ENCODE measurements at regions of chr7 and their contacts with region 1.

Region 1: GRCh38 chr7:102286237-102287110 is at the start of gene SH2B2:
- DNase-seq: peak; percentile 86
- CTCF ChIP-seq: no peak

Region 2: GRCh38 chr7:102389810-102390209 is 103.3 kb after region 1 on chr7:
- in situ Hi-C with region 1: loop called (anchors 5 kb)
- DNase-seq: no peak
- CTCF ChIP-seq: no peak

Region 3: GRCh38 chr7:102404005-102404861 is 117.8 kb after region 1 on chr7:
- in situ Hi-C with region 1: no loop called
- DNase-seq: peak; percentile 75
- CTCF ChIP-seq: peak; percentile 77